Transverse colon (tissue), 4 donors: ENCODE measurements at regions of chr2 and their contacts with region 1.

Region 1: GRCh38 chr2:233163486-233164103 is 87.9 kb upstream of the ATG16L1 start:
- DNase-seq: no peak
- H3K4me3 ChIP-seq: no peak overlapping the region
- H3K27ac ChIP-seq: no peak overlapping the region
- H3K4me1 ChIP-seq: peaks cover 0 to 13% (median 9%) of the 10 kb centered on the region in 4 donors
- H3K27me3 ChIP-seq: no peaks in the 10 kb centered on the region
- CTCF ChIP-seq: no peak
- EP300 ChIP-seq: no peak
- POLR2A ChIP-seq: no peak

Region 2: GRCh38 chr2:233101819-233102218 is 61.8 kb before region 1 on chr2:
- in situ Hi-C with region 1: no loop called
- intact Hi-C with region 1: loop called (anchors 2 kb)
- DNase-seq: no peak
- H3K4me3 ChIP-seq: no peak overlapping the region
- H3K27ac ChIP-seq: no peak overlapping the region
- H3K4me1 ChIP-seq: no peaks in the 10 kb centered on the region
- H3K27me3 ChIP-seq: no peaks in the 10 kb centered on the region
- CTCF ChIP-seq: no peak
- EP300 ChIP-seq: no peak
- POLR2A ChIP-seq: no peak

Region 3: DNA sequence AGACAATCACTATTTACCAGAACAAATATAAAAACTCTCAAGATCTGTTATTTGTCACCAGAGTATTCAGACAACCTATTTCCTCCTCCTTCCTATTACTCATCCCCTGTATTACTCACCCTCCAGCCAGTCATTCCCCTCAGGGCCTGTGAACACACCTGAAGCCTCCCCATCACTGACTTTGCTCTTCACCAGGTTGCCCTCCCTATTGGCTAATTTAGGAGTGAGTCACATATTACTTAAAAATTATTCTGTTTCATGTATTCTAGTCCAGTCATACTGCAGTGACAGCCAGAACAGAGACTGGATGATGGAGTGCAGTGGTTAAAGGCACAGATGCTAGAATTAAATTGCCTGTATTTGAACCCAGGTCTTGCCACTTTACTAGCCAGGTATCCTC is 84.2 kb after region 1 on chr2:
- in situ Hi-C with region 1: no loop called
- intact Hi-C with region 1: no loop called
- DNase-seq: no peak
- H3K4me3 ChIP-seq: no peak overlapping the region
- H3K27ac ChIP-seq: peak overlapping the region in 1 of 4 donors; percentile 33
- H3K4me1 ChIP-seq: peaks cover 0 to 21% (median 5%) of the 10 kb centered on the region in 4 donors
- H3K27me3 ChIP-seq: no peaks in the 10 kb centered on the region
- CTCF ChIP-seq: no peak
- EP300 ChIP-seq: no peak
- POLR2A ChIP-seq: no peak